Activated CD4-positive, alpha-beta memory T cell treated with anti-CD3 and anti-CD28 coated beads for 36 hours (primary cell): ENCODE measurements at regions of chr3 and their contacts with region 1.

Region 1: GRCh38 chr3:192444096-192444790 is 283.1 kb downstream of the FGF12 start:
- DNase-seq: peak; percentile 70
- H3K4me3 Mint-ChIP-seq: no peak overlapping the region
- H3K27ac Mint-ChIP-seq: no peak overlapping the region
- H3K4me1 Mint-ChIP-seq: no peaks in the 10 kb centered on the region
- H3K27me3 Mint-ChIP-seq: peaks cover 22% of the 10 kb centered on the region

Region 2: DNA sequence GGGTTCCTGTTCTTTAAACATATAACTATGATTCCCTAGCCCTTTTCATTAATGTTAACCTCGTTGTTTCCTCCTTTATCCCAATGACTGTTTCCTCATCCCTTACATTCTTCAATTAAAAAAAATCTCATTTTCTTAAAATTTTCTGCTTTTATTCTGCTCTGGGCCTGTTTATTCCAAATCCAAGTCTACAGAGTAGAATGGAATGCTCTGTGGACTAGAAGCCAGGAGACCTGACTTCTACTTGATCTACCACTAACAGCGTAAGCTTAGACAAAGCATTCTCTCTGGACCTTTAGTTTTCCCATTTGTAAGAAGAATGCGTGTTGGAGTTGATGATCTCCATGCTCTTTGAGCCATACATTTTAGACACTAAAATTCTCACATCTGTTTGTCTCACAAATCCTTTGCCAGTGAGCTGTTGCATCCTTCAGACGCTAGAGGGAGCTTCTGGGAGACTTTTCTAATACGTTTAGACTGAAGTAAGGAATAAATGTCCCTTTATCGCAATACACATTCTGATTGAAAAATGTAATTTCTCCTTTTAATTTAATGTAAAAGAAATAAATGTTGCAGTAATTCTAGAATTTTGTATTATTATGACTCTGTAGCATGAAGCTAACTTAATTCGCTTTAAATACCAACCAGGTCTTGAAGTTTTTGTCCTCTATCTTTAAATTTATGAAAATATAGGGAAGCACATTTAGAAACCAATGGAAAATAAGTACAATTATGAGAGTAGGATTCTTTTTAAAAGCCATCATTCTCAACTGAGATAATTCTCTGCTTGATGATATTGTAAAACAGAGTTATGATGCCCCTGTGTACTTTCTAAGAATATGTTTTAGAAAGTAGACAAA is 1560.0 kb before region 1 on chr3:
- CTCF ChIA-PET with region 1: interaction called, 4 read pairs
- POLR2A ChIA-PET with region 1: no interaction called
- intact Hi-C with region 1: loop called (anchors 10 kb)
- DNase-seq: peak; percentile 31
- H3K4me3 Mint-ChIP-seq: no peak overlapping the region
- H3K27ac Mint-ChIP-seq: no peak overlapping the region
- H3K4me1 Mint-ChIP-seq: no peaks in the 10 kb centered on the region
- H3K27me3 Mint-ChIP-seq: peaks cover 5% of the 10 kb centered on the region

Region 3: DNA sequence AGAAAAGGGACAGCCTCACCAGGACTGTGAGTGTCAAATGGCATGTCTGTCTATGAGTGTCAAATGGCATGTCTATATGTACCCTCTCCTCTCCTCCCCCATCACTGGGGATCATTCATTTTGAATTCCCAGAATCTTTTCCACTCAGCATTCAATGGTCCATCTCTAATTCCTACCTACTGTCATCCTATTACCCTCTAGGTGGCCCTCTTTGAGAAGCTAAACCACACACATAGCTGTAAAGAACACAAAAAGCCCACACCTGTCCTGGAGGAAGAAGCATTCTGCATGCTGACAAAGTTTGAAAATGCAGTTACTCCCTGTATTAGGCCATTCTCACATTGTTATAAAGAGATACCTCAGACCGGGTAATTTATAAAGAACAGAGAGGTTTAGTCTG is 1029.5 kb before region 1 on chr3:
- CTCF ChIA-PET with region 1: interaction called, 17 read pairs
- POLR2A ChIA-PET with region 1: no interaction called
- intact Hi-C with region 1: loop called (anchors 2 kb)
- DNase-seq: no peak
- H3K4me3 Mint-ChIP-seq: no peak overlapping the region
- H3K27ac Mint-ChIP-seq: no peak overlapping the region
- H3K4me1 Mint-ChIP-seq: no peaks in the 10 kb centered on the region
- H3K27me3 Mint-ChIP-seq: no peaks in the 10 kb centered on the region

Region 4: GRCh38 chr3:192130534-192131132 is 313.6 kb before region 1 on chr3:
- CTCF ChIA-PET with region 1: interaction called, 6 read pairs
- POLR2A ChIA-PET with region 1: no interaction called
- intact Hi-C with region 1: loop called (anchors 1 kb)
- DNase-seq: peak; percentile 12
- H3K4me3 Mint-ChIP-seq: no peak overlapping the region
- H3K27ac Mint-ChIP-seq: no peak overlapping the region
- H3K4me1 Mint-ChIP-seq: no peaks in the 10 kb centered on the region
- H3K27me3 Mint-ChIP-seq: no peaks in the 10 kb centered on the region

Region 5: DNA sequence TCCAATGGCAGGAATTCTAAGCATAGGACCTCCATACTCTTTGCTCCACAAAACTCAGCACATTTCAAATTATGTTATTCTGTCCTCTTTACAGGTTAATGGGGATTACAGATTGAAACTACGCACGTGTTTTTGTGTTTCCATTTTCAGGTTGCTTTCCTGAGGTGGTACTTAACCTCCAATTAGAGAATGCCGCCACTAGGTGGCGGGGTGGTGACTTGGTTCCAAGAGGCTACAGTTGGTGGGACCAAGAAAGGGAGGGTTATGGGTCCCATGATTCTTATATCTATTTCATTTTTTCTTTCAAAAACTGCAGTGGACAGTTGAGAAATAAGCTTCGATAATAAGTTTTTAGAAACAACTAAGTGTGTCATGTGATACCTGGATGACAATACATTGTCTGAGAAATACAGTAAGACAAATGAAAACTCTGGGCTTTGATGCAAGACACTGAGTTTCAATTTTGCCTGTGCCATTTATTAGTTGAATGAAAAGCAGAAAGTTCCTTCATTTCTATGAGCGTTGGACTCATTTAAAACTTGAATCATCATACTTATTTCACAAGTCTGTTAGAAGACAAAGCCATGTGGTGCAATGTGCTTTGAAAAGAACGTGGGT is 255.9 kb before region 1 on chr3:
- CTCF ChIA-PET with region 1: interaction called, 51 read pairs
- POLR2A ChIA-PET with region 1: no interaction called
- intact Hi-C with region 1: loop called (anchors 1 kb)
- DNase-seq: peak; percentile 47
- H3K4me3 Mint-ChIP-seq: no peak overlapping the region
- H3K27ac Mint-ChIP-seq: no peak overlapping the region
- H3K4me1 Mint-ChIP-seq: peaks cover 3% of the 10 kb centered on the region
- H3K27me3 Mint-ChIP-seq: no peaks in the 10 kb centered on the region

Region 6: GRCh38 chr3:192395506-192395905 is 48.7 kb before region 1 on chr3:
- CTCF ChIA-PET with region 1: no interaction called
- POLR2A ChIA-PET with region 1: no interaction called
- intact Hi-C with region 1: no loop called
- DNase-seq: no peak
- H3K4me3 Mint-ChIP-seq: no peak overlapping the region
- H3K27ac Mint-ChIP-seq: no peak overlapping the region
- H3K4me1 Mint-ChIP-seq: no peaks in the 10 kb centered on the region
- H3K27me3 Mint-ChIP-seq: no peaks in the 10 kb centered on the region

Region 7: GRCh38 chr3:192433704-192434103 is 10.5 kb before region 1 on chr3:
- CTCF ChIA-PET with region 1: interaction called, 36 read pairs
- POLR2A ChIA-PET with region 1: no interaction called
- intact Hi-C with region 1: no loop called
- DNase-seq: no peak
- H3K4me3 Mint-ChIP-seq: no peak overlapping the region
- H3K27ac Mint-ChIP-seq: no peak overlapping the region
- H3K4me1 Mint-ChIP-seq: no peaks in the 10 kb centered on the region
- H3K27me3 Mint-ChIP-seq: peaks cover 5% of the 10 kb centered on the region